ENCODE measurements at regions of chrX and their contacts with region 1.

Region 1: GRCh38 chrX:119574394-119575266 is at the start of gene UBE2A:
- DNase-seq: peak; percentile 90
- H3K4me3 ChIP-seq: peak within 1 kb of the TSS; percentile 75 to 85 (median 85)
- H3K27ac ChIP-seq: peak within 1 kb of the TSS; percentile 71
- H3K4me1 ChIP-seq: peaks cover 10% of the 10 kb centered on the region
- H3K27me3 ChIP-seq: no peaks in the 10 kb centered on the region
- CTCF ChIP-seq: no peak
- POLR2A ChIP-seq: peak; percentile 82
- total RNA-seq, gene UBE2A: 66.1 and 66.9 TPM in 2 replicates

Region 2: GRCh38 chrX:118847676-118848075 is 727.0 kb before region 1 on chrX:
- CTCF ChIA-PET with region 1: no interaction called
- POLR2A ChIA-PET with region 1: no interaction called
- dilution Hi-C with region 1: no loop called
- intact Hi-C with region 1: loop called (anchors 5 kb)
- DNase-seq: peak; percentile 70
- H3K4me3 ChIP-seq: no peak overlapping the region
- H3K27ac ChIP-seq: no peak overlapping the region
- H3K4me1 ChIP-seq: peaks cover 3% of the 10 kb centered on the region
- H3K27me3 ChIP-seq: no peaks in the 10 kb centered on the region
- CTCF ChIP-seq: peak; percentile 19 to 38
- POLR2A ChIP-seq: no peak

Region 3: GRCh38 chrX:119359618-119360382 is 214.8 kb before region 1 on chrX:
- CTCF ChIA-PET with region 1: no interaction called
- POLR2A ChIA-PET with region 1: no interaction called
- dilution Hi-C with region 1: no loop called
- intact Hi-C with region 1: no loop called
- DNase-seq: no peak
- H3K4me3 ChIP-seq: no peak overlapping the region
- H3K27ac ChIP-seq: no peak overlapping the region
- H3K4me1 ChIP-seq: no peaks in the 10 kb centered on the region
- H3K27me3 ChIP-seq: no peaks in the 10 kb centered on the region
- CTCF ChIP-seq: no peak
- POLR2A ChIP-seq: no peak

Region 4: GRCh38 chrX:119541188-119541587 is 33.4 kb before region 1 on chrX:
- CTCF ChIA-PET with region 1: no interaction called
- POLR2A ChIA-PET with region 1: no interaction called
- dilution Hi-C with region 1: no loop called
- intact Hi-C with region 1: loop called (anchors 2 kb)
- DNase-seq: peak; percentile 69
- H3K4me3 ChIP-seq: no peak overlapping the region
- H3K27ac ChIP-seq: peak overlapping the region; percentile 82
- H3K4me1 ChIP-seq: peaks cover 10% of the 10 kb centered on the region
- H3K27me3 ChIP-seq: no peaks in the 10 kb centered on the region
- CTCF ChIP-seq: no peak
- POLR2A ChIP-seq: no peak

Region 5: GRCh38 chrX:119589810-119590209 is 15.2 kb after region 1 on chrX:
- CTCF ChIA-PET with region 1: no interaction called
- POLR2A ChIA-PET with region 1: interaction called, 7 read pairs
- dilution Hi-C with region 1: no loop called
- intact Hi-C with region 1: loop called (anchors 1 kb)
- DNase-seq: no peak
- H3K4me3 ChIP-seq: no peak overlapping the region
- H3K27ac ChIP-seq: no peak overlapping the region
- H3K4me1 ChIP-seq: no peaks in the 10 kb centered on the region
- H3K27me3 ChIP-seq: no peaks in the 10 kb centered on the region
- CTCF ChIP-seq: no peak
- POLR2A ChIP-seq: no peak

Region 6: GRCh38 chrX:119606280-119607015 is 31.8 kb after region 1 on chrX and contains the start of gene NKRF:
- CTCF ChIA-PET with region 1: interaction called, 3 read pairs
- POLR2A ChIA-PET with region 1: interaction called, 9 read pairs
- dilution Hi-C with region 1: no loop called
- intact Hi-C with region 1: loop called (anchors 2 kb)
- DNase-seq: peak; percentile 92
- H3K4me3 ChIP-seq: peak within 1 kb of the TSS; percentile 16 to 63 (median 54)
- H3K27ac ChIP-seq: peak within 1 kb of the TSS; percentile 63
- H3K4me1 ChIP-seq: peaks cover 2% of the 10 kb centered on the region
- H3K27me3 ChIP-seq: peaks cover 0 to 3% of the 10 kb centered on the region in 2 experiments
- CTCF ChIP-seq: no peak
- POLR2A ChIP-seq: peak; percentile 78
- total RNA-seq, gene NKRF: 10.8 and 12.0 TPM in 2 replicates